CD4-positive, alpha-beta memory T cell (primary cell): ENCODE measurements at regions of chr7 and their contacts with region 1.

Region 1: GRCh38 chr7:150685219-150686029 is at the start of gene GIMAP2:
- DNase-seq: peak; percentile 64 to 69 (median 65)
- H3K4me3 ChIP-seq: peak within 1 kb of the TSS; percentile 80 to 97
- H3K4me3 Mint-ChIP-seq: peak within 1 kb of the TSS; percentile 94 to 99 (median 98)
- H3K27ac ChIP-seq: peak within 1 kb of the TSS; percentile 90
- H3K27ac Mint-ChIP-seq: peak within 1 kb of the TSS; percentile 90 to 99 (median 97)
- H3K4me1 ChIP-seq: peaks cover 60% of the 10 kb centered on the region
- H3K4me1 Mint-ChIP-seq: peaks cover 55 to 97% (median 74%) of the 10 kb centered on the region in 4 donors
- H3K27me3 ChIP-seq: no peaks in the 10 kb centered on the region
- H3K27me3 Mint-ChIP-seq: no peaks in the 10 kb centered on the region
- total RNA-seq, gene GIMAP2: 238 to 244 TPM

Region 2: GRCh38 chr7:150620617-150621371 is 64.6 kb before region 1 on chr7:
- CTCF ChIA-PET with region 1: no interaction called
- POLR2A ChIA-PET with region 1: interaction called, 12 read pairs
- intact Hi-C with region 1: no loop called
- DNase-seq: no peak
- H3K4me3 ChIP-seq: no peak overlapping the region
- H3K4me3 Mint-ChIP-seq: peak overlapping the region; percentile 2 to 63 (median 44)
- H3K27ac ChIP-seq: no peak overlapping the region
- H3K27ac Mint-ChIP-seq: peak overlapping the region; percentile 70 to 92 (median 86)
- H3K4me1 ChIP-seq: peaks cover 41% of the 10 kb centered on the region
- H3K4me1 Mint-ChIP-seq: peaks cover 42 to 61% (median 54%) of the 10 kb centered on the region in 4 donors
- H3K27me3 ChIP-seq: no peaks in the 10 kb centered on the region
- H3K27me3 Mint-ChIP-seq: no peaks in the 10 kb centered on the region

Region 3: DNA sequence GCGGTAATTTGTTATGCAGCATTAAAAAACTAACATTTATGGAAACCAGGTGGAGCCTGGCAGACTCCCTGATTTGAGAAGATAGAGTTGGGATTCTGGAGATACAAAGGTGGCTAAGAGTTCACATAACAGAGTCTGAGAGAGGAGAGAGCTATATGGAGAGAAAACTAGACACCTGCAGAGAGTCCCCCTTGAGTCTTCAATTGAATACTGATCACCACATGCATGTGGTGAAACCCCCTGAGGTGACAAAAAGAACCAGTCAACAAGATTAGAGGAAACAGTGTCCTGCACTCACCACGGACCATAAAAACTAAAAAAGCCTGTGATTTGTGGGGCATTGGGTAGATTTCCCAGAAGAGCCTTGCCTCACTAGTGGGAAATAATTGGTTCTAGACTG is 10.2 kb after region 1 on chr7:
- CTCF ChIA-PET with region 1: interaction called, 3 read pairs
- POLR2A ChIA-PET with region 1: interaction called, 20 read pairs
- intact Hi-C with region 1: no loop called
- DNase-seq: no peak
- H3K4me3 ChIP-seq: no peak overlapping the region
- H3K4me3 Mint-ChIP-seq: peak overlapping the region in 2 of 8 donors; percentile 57
- H3K27ac ChIP-seq: no peak overlapping the region
- H3K27ac Mint-ChIP-seq: peak overlapping the region in 1 of 7 donors; percentile 4
- H3K4me1 ChIP-seq: peaks cover 6% of the 10 kb centered on the region
- H3K4me1 Mint-ChIP-seq: peaks cover 5 to 20% (median 13%) of the 10 kb centered on the region in 4 donors
- H3K27me3 ChIP-seq: no peaks in the 10 kb centered on the region
- H3K27me3 Mint-ChIP-seq: no peaks in the 10 kb centered on the region

Region 4: DNA sequence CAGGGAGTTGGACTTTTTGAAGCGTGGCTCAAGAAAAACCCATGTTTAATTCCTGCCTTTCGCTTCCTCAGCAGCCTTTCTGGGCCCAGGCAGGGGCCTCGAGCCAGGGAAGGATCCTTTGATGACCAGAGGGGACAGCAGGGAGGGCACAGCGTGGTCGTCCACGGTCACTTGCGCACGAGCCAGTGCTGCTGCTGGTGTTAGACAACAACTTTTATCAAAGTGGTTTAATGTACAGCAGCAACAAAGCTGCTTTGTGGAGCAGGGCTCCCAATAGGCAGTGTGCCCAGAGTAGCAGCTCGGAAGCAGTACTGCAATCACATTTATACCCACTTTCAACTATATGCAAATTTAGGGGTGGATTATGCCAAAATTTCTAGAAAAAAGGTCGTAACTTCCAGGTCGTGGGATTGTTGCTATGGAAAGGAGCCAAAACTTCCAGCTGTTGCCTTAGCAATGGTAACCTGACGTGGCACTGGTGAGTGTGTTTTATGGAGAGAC is 37.1 kb after region 1 on chr7:
- CTCF ChIA-PET with region 1: interaction called, 29 read pairs
- POLR2A ChIA-PET with region 1: interaction called, 167 read pairs
- intact Hi-C with region 1: loop called (anchors 2 kb)
- DNase-seq: peak in 1 of 5 donors; percentile 9
- H3K4me3 ChIP-seq: peak overlapping the region in 1 of 2 donors; percentile 6
- H3K4me3 Mint-ChIP-seq: peak overlapping the region; percentile 57 to 72 (median 66)
- H3K27ac ChIP-seq: no peak overlapping the region
- H3K27ac Mint-ChIP-seq: peak overlapping the region in 4 of 7 donors; percentile 38 to 80 (median 74)
- H3K4me1 ChIP-seq: peaks cover 57% of the 10 kb centered on the region
- H3K4me1 Mint-ChIP-seq: peaks cover 45 to 81% (median 57%) of the 10 kb centered on the region in 4 donors
- H3K27me3 ChIP-seq: no peaks in the 10 kb centered on the region
- H3K27me3 Mint-ChIP-seq: no peaks in the 10 kb centered on the region

Region 5: GRCh38 chr7:150737265-150738055 is 52.0 kb after region 1 on chr7 and contains the start of gene GIMAP5:
- CTCF ChIA-PET with region 1: interaction called, 8 read pairs
- POLR2A ChIA-PET with region 1: interaction called, 136 read pairs
- intact Hi-C with region 1: loop called (anchors 5 kb)
- DNase-seq: peak in 4 of 5 donors; percentile 58 to 74 (median 61)
- H3K4me3 ChIP-seq: peak within 1 kb of the TSS; percentile 81 to 82
- H3K4me3 Mint-ChIP-seq: peak within 1 kb of the TSS; percentile 92 to 100 (median 98)
- H3K27ac ChIP-seq: peak within 1 kb of the TSS; percentile 83
- H3K27ac Mint-ChIP-seq: peak within 1 kb of the TSS; percentile 86 to 98 (median 96)
- H3K4me1 ChIP-seq: peaks cover 64% of the 10 kb centered on the region
- H3K4me1 Mint-ChIP-seq: peaks cover 55 to 94% (median 64%) of the 10 kb centered on the region in 4 donors
- H3K27me3 ChIP-seq: no peaks in the 10 kb centered on the region
- H3K27me3 Mint-ChIP-seq: no peaks in the 10 kb centered on the region
- total RNA-seq, gene GIMAP5: 296 to 297 TPM